AG04450 (cell line): ENCODE measurements at regions of chr11 and their contacts with region 1.

Region 1: GRCh38 chr11:17972987-17973386 is 39.9 kb downstream of the SERGEF start:
- DNase-seq: peak; percentile 83
- H3K4me3 ChIP-seq: no peak overlapping the region
- H3K27ac ChIP-seq: no peak overlapping the region
- H3K27me3 ChIP-seq: no peaks in the 10 kb centered on the region
- CTCF ChIP-seq: peak; percentile 97

Region 2: DNA sequence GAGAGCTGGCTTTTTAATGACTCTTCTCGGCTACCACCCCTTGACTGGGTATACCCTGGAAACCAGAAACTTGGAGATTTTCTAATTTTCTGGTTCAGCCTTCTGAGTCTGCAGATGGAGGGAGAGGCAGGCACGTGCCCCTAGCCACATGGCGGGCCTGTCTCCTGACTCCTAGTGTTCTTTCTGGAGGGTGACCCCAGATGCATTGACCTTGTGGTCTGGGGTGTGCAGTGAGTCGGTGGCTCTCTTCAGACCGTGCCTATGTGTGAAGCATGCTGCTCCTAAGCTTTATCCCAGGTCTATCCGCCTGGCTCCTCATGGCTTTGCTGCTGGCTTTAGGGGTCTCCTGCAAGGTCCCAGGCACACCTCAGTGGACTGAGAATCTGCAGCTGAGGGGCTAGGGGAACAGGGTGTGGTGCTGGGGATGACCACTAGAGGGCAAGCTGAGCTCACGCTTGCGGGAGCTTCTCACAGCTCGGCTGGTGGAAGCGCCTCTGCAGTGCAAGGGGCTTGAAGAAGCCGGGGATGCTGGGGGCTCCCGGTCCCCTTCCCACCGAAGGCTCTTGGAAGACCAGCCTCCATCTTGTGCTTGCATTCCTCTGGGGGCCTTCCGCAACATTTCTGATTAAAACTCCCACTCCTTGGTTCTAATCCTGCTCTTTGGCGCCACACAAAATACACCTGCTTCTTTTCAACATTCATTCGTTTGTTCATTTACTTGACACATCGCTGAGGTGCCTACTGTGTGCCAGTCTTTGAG is 374.1 kb before region 1 on chr11:
- CTCF ChIA-PET with region 1: interaction called, 25 read pairs
- POLR2A ChIA-PET with region 1: no interaction called
- DNase-seq: peak; percentile 26
- H3K4me3 ChIP-seq: no peak overlapping the region
- H3K27ac ChIP-seq: no peak overlapping the region
- H3K27me3 ChIP-seq: peaks cover 4% of the 10 kb centered on the region
- CTCF ChIP-seq: peak; percentile 98

Region 3: GRCh38 chr11:17760102-17761029 is 212.6 kb before region 1 on chr11:
- CTCF ChIA-PET with region 1: interaction called, 63 read pairs
- POLR2A ChIA-PET with region 1: no interaction called
- DNase-seq: no peak
- H3K4me3 ChIP-seq: no peak overlapping the region
- H3K27ac ChIP-seq: no peak overlapping the region
- H3K27me3 ChIP-seq: peaks cover 13% of the 10 kb centered on the region
- CTCF ChIP-seq: peak; percentile 73

Region 4: DNA sequence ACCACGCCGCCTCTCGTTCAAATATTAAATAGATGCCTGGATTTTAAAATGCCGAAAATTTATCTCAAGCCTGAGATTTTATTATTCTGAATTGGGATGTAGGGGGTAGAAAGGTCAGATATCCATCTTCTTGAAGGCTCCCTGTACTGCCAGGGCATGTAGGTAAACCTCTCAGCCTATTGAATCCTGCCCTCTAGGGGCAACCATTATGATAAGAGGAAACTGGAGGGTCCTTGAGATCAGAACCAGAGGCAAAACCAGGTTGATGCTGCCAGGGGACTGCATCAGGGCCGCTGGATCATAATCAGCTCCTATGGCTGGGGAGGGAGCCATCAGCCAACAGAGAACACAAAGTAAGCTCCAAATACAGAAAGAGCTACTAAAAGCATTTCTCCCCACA is 146.0 kb before region 1 on chr11:
- CTCF ChIA-PET with region 1: interaction called, 10 read pairs
- POLR2A ChIA-PET with region 1: no interaction called
- DNase-seq: no peak
- H3K4me3 ChIP-seq: no peak overlapping the region
- H3K27ac ChIP-seq: no peak overlapping the region
- H3K27me3 ChIP-seq: no peaks in the 10 kb centered on the region
- CTCF ChIP-seq: 0 out of 2 replicates have a peak, but pooled peaks have one; percentile 15

Region 5: GRCh38 chr11:17986007-17986710 is 13.2 kb after region 1 on chr11:
- CTCF ChIA-PET with region 1: interaction called, 111 read pairs
- POLR2A ChIA-PET with region 1: no interaction called
- DNase-seq: peak; percentile 63
- H3K4me3 ChIP-seq: no peak overlapping the region
- H3K27ac ChIP-seq: peak overlapping the region; percentile 48
- H3K27me3 ChIP-seq: no peaks in the 10 kb centered on the region
- CTCF ChIP-seq: no peak

Region 6: DNA sequence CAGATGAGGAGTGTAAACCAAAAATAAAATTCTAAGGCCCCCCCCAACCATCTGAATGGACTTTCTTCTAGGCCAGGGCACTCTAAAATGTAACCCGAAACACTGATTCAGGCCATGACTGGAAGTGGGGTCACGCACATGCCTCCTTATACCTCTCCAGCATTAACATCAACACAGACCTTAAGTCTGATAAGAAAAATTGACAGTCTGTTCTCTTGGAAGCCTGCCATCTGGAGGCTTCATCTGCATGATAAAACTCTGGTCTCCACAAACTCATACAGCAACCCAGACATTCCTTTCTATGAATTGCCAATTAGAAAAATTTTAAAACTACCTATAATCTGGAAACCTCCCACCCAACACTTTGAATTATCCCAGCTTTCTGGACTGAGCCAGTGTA is 43.8 kb after region 1 on chr11:
- CTCF ChIA-PET with region 1: no interaction called
- POLR2A ChIA-PET with region 1: no interaction called
- DNase-seq: no peak
- H3K4me3 ChIP-seq: no peak overlapping the region
- H3K27ac ChIP-seq: no peak overlapping the region
- H3K27me3 ChIP-seq: peaks cover 10% of the 10 kb centered on the region
- CTCF ChIP-seq: no peak

Region 7: DNA sequence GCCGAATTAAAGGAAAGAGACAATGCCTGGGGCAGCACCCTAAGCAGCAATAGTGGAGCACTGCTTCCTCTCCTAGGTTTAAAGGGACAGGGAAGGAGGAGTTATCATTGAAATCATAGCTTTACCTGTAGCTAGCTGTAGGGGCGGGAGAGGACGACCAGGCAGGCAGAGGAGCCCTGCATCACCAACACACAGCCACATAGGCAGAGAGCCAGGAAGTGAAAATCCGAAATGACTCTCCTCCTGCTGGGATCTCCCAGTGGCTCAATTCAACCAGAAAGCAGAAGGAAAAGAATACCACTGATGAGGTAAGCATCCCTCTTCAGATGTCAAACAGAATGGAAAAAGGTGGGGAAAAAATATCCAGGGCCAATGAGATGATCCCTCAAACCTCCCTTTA is 220.0 kb after region 1 on chr11:
- CTCF ChIA-PET with region 1: no interaction called
- POLR2A ChIA-PET with region 1: no interaction called
- DNase-seq: no peak
- H3K4me3 ChIP-seq: no peak overlapping the region
- H3K27ac ChIP-seq: no peak overlapping the region
- H3K27me3 ChIP-seq: no peaks in the 10 kb centered on the region
- CTCF ChIP-seq: no peak